Adrenal gland (tissue), 19 donors: ENCODE measurements at regions of chr1 and their contacts with region 1.

Region 1: GRCh38 chr1:154669464-154670282 is 61.7 kb upstream of the ADAR start:
- DNase-seq: peak; percentile 57 to 91 (median 79)
- H3K4me3 ChIP-seq: no peak overlapping the region
- H3K27ac ChIP-seq: no peak overlapping the region
- H3K4me1 ChIP-seq: no peaks in the 10 kb centered on the region
- H3K27me3 ChIP-seq: peaks cover 4% of the 10 kb centered on the region
- CTCF ChIP-seq: peak; percentile 55 to 87 (median 78)
- POLR2A ChIP-seq: no peak

Region 2: GRCh38 chr1:154878371-154879022 is 208.8 kb after region 1 on chr1:
- intact Hi-C with region 1: loop called (anchors 5 kb)
- DNase-seq: peak; percentile 70 to 93 (median 81)
- H3K4me3 ChIP-seq: no peak overlapping the region
- H3K27ac ChIP-seq: no peak overlapping the region
- H3K4me1 ChIP-seq: no peaks in the 10 kb centered on the region
- H3K27me3 ChIP-seq: no peaks in the 10 kb centered on the region
- CTCF ChIP-seq: peak; percentile 77 to 92 (median 83)
- POLR2A ChIP-seq: no peak